Activated CD4-positive, alpha-beta T cell treated with anti-CD3 and anti-CD28 coated beads, Interleukin-2, amount 10 ng/mL, durations not matched to agents 24 days and 14 days (primary cell): ENCODE measurements at regions of chr13 and their contacts with region 1.

Region 1: GRCh38 chr13:72727417-72728289 is at the starts of genes BORA and MZT1:
- DNase-seq: peak; percentile 99
- H3K4me3 Mint-ChIP-seq: peak within 1 kb of the TSS; percentile 96
- H3K27ac Mint-ChIP-seq: peak within 1 kb of the TSS; percentile 94
- H3K4me1 Mint-ChIP-seq: peaks cover 48% of the 10 kb centered on the region
- H3K27me3 Mint-ChIP-seq: no peaks in the 10 kb centered on the region
- total RNA-seq, gene BORA: 17.3 and 18.1 TPM in 2 replicates
- total RNA-seq, gene MZT1: 24.1 and 24.4 TPM in 2 replicates

Region 2: GRCh38 chr13:71079638-71080037 is 1648.0 kb before region 1 on chr13:
- intact Hi-C with region 1: no loop called
- DNase-seq: no peak
- H3K4me3 Mint-ChIP-seq: no peak overlapping the region
- H3K27ac Mint-ChIP-seq: no peak overlapping the region
- H3K4me1 Mint-ChIP-seq: no peaks in the 10 kb centered on the region
- H3K27me3 Mint-ChIP-seq: no peaks in the 10 kb centered on the region

Region 3: GRCh38 chr13:72638059-72638815 is 89.4 kb before region 1 on chr13:
- intact Hi-C with region 1: no loop called
- DNase-seq: no peak
- H3K4me3 Mint-ChIP-seq: no peak overlapping the region
- H3K27ac Mint-ChIP-seq: no peak overlapping the region
- H3K4me1 Mint-ChIP-seq: no peaks in the 10 kb centered on the region
- H3K27me3 Mint-ChIP-seq: peaks cover 2% of the 10 kb centered on the region

Region 4: DNA sequence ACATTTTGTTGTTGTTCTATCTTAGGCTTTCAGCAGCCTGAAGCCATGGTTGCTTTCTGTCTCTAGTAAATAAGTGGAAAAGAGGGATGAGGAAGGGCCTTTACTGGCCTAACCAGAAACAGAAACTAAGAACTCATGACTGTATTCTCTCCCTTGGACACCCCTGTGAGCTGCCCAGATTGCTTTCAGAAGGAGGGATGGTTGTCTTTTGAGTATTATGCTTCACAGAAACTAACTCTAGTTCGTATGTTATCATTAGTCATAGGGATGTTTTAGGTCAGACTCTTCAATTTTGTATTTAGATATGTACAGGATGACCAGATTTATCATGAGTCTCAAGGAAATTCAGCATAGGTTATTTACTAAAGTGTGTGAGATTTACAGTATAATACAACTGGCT is 17.6 kb after region 1 on chr13:
- intact Hi-C with region 1: loop called (anchors 2 kb)
- DNase-seq: no peak
- H3K4me3 Mint-ChIP-seq: no peak overlapping the region
- H3K27ac Mint-ChIP-seq: peak overlapping the region; percentile 41
- H3K4me1 Mint-ChIP-seq: peaks cover 22% of the 10 kb centered on the region
- H3K27me3 Mint-ChIP-seq: no peaks in the 10 kb centered on the region